Activated CD8-positive, alpha-beta T cell treated with anti-CD3 and anti-CD28 coated beads for 36 hours (primary cell): ENCODE measurements at regions of chr15 and their contacts with region 1.

Region 1: DNA sequence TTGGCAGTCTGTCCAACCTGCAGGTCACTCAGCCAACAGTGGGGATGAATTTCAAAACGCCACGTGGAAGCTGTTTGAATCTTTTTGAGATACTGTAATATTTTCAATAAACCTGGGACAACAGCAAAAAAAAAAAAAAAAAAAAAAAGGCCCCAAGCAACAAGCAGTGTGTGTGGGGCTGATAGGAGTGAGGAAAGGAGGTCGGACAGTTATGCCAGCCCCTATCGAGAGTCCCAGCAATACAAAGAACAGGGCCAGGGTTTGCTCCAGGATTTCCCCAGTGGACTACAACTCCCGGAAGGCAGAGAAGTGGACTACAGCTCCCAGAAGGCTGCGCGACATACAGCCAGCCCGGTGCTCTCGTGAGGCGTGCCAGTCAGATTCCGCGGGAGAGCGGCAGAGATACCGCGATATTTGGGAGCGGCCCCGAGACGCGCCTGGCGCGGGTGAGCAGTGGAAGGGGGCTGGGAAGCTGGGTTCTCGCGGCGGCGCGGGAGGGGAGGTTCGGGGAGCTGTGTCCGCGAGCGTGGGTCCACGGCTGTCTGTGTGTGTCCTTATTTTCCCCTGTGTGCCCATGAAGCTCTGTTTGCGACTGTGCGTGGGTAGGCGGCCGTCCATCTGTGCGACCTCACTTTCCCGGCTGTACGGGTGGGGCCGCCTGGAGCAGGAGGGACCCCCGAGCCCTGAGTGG is at the start of gene PPCDC:
- DNase-seq: peak; percentile 97
- ATAC-seq: peak; percentile 100
- H3K4me3 Mint-ChIP-seq: peak within 1 kb of the TSS; percentile 93
- H3K27ac Mint-ChIP-seq: peak within 1 kb of the TSS; percentile 90
- H3K4me1 Mint-ChIP-seq: peaks cover 19% of the 10 kb centered on the region
- H3K27me3 Mint-ChIP-seq: no peaks in the 10 kb centered on the region
- CTCF ChIP-seq: no peak
- total RNA-seq, gene PPCDC: 25.7 to 26.6 TPM

Region 2: GRCh38 chr15:74964794-74965193 is 58.5 kb before region 1 on chr15:
- CTCF ChIA-PET with region 1: no interaction called
- POLR2A ChIA-PET with region 1: no interaction called
- intact Hi-C with region 1: no loop called
- DNase-seq: no peak
- ATAC-seq: no peak
- H3K4me3 Mint-ChIP-seq: no peak overlapping the region
- H3K27ac Mint-ChIP-seq: no peak overlapping the region
- H3K4me1 Mint-ChIP-seq: peaks cover 17% of the 10 kb centered on the region
- H3K27me3 Mint-ChIP-seq: peaks cover 11% of the 10 kb centered on the region
- CTCF ChIP-seq: no peak

Region 3: DNA sequence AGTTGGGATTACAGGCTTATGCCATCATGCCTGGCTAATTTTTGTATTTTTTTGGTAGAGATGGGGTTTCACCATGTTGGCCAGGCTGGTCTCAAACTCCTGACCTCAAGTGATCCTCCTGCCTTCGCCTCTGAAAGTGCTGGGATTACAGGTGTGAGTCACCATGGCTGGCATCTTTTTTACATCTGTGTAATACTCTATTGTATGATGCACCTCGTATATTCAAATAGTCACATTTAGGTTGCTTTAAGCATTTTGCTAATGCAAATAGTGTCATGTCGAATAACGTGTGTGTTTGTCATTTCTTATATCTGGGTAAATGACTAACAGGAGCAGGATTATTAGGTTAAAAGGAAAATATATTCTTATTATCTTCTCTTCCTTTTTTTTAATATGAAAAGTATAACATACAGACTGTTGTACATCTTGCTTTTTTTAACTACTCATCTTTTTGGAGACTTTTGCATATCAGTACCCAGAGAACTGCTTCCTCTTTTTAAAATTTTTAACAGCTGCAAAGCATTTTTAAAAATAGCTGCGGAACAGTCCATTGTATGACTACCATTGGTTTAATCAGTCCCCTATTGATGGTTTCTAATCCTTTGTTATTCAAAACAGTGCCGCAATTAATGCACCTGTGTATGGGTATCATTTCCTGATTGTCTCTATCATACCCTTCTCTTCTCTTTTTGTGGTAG is 14.5 kb before region 1 on chr15:
- CTCF ChIA-PET with region 1: no interaction called
- POLR2A ChIA-PET with region 1: interaction called, 11 read pairs
- intact Hi-C with region 1: no loop called
- DNase-seq: no peak
- ATAC-seq: no peak
- H3K4me3 Mint-ChIP-seq: no peak overlapping the region
- H3K27ac Mint-ChIP-seq: no peak overlapping the region
- H3K4me1 Mint-ChIP-seq: no peaks in the 10 kb centered on the region
- H3K27me3 Mint-ChIP-seq: peaks cover 2% of the 10 kb centered on the region
- CTCF ChIP-seq: no peak